Sciatic nerve (tissue), 2 donors: ENCODE measurements at regions of chr5 and their contacts with region 1.

Region 1: GRCh38 chr5:62783374-62784057 is 204.9 kb downstream of the LRRC70 start:
- DNase-seq: no peak
- ATAC-seq: no peak

Region 2: DNA sequence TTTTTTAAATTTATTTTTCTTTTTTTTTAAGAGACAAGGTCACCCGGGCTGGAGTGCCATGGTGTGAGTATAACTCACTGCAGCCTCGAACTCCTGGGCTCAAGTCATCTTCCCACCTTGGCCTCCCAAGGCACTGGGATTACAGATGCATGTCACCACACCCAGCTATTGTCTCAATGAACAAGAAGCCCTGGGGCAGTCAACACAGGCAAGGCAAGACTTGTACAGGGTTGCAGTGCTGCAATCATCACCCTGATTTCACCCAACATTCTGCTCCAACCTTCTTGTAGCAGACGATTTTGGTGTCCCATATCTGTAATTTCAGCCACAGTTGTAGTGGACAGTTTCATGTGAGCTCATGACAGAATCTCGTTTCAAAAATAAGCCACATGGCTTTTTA is 683.3 kb before region 1 on chr5:
- intact Hi-C with region 1: no loop called
- DNase-seq: no peak
- ATAC-seq: no peak

Region 3: GRCh38 chr5:62460578-62460983 is 322.9 kb before region 1 on chr5:
- intact Hi-C with region 1: loop called (anchors 5 kb)
- DNase-seq: no peak
- ATAC-seq: peak; percentile 51